ENCODE measurements at regions of chr20 and their contacts with region 1.

Region 1: GRCh38 chr20:48657475-48658470 is 170.0 kb downstream of the PREX1 start:
- H3K4me3 ChIP-seq: no peak overlapping the region
- H3K27ac ChIP-seq: no peak overlapping the region
- H3K4me1 ChIP-seq: no peaks in the 10 kb centered on the region
- CTCF ChIP-seq: peak; percentile 89

Region 2: GRCh38 chr20:48597405-48598302 is 60.1 kb before region 1 on chr20:
- CTCF ChIA-PET with region 1: no interaction called
- POLR2A ChIA-PET with region 1: no interaction called
- H3K4me3 ChIP-seq: no peak overlapping the region
- H3K27ac ChIP-seq: no peak overlapping the region
- H3K4me1 ChIP-seq: no peaks in the 10 kb centered on the region
- CTCF ChIP-seq: no peak

Region 3: GRCh38 chr20:48682529-48683251 is 24.9 kb after region 1 on chr20:
- CTCF ChIA-PET with region 1: interaction called, 21 read pairs
- POLR2A ChIA-PET with region 1: no interaction called
- H3K4me3 ChIP-seq: peak overlapping the region; percentile 1; the same call in 1 of the 2 replicates
- H3K27ac ChIP-seq: peak overlapping the region; percentile 50; the same call in 1 of the 2 replicates
- H3K4me1 ChIP-seq: peaks cover 12% of the 10 kb centered on the region
- CTCF ChIP-seq: no peak

Region 4: GRCh38 chr20:48697879-48698724 is 40.3 kb after region 1 on chr20:
- CTCF ChIA-PET with region 1: interaction called, 29 read pairs
- POLR2A ChIA-PET with region 1: interaction called, 3 read pairs
- H3K4me3 ChIP-seq: no peak overlapping the region
- H3K27ac ChIP-seq: no peak overlapping the region; the same call in 1 of the 2 replicates
- H3K4me1 ChIP-seq: peaks cover 7% of the 10 kb centered on the region
- CTCF ChIP-seq: no peak

Region 5: DNA sequence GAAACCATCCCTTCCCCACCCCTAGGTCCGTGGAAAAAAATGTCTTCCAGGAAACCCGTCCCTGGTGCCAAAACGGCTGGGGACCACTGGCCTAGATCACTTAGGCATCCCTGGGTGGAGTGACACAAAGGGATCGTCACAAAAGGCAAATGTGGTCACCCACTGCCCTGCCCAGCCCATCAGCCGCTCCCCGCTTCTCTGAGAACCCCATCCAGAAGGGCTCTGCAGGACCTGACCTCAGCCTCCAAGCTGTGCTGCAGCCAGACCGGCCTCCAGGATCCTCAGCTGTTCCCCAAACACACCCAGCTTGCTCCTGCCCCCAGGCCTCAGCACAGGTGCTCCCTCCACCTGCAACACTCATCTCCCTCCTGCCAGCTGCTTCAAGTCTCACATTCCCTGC is 108.4 kb after region 1 on chr20:
- CTCF ChIA-PET with region 1: no interaction called
- POLR2A ChIA-PET with region 1: no interaction called
- H3K4me3 ChIP-seq: no peak overlapping the region
- H3K27ac ChIP-seq: no peak overlapping the region
- H3K4me1 ChIP-seq: no peaks in the 10 kb centered on the region
- CTCF ChIP-seq: no peak

Region 6: DNA sequence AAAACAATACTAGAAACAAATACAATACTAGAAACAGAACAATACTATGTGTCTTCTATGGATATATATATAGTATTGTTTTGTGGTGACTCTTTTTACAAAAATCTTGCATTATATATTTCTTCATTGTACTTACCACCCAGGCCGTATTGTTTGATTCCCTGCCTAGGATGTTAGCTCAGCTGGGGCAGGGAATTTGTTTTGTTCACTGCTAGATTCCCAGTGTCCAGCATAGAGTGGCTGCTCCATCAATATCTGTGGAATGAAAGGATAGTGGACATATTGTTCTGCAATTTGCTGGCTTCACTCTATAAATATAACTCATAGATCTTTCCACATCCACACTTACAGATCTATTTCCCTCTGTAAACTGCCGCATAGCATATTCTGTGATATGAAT is 191.5 kb after region 1 on chr20:
- CTCF ChIA-PET with region 1: interaction called, 10 read pairs
- POLR2A ChIA-PET with region 1: no interaction called
- H3K4me3 ChIP-seq: no peak overlapping the region
- H3K27ac ChIP-seq: no peak overlapping the region
- H3K4me1 ChIP-seq: no peaks in the 10 kb centered on the region
- CTCF ChIP-seq: no peak

Region 7: GRCh38 chr20:48897246-48897994 is 239.6 kb after region 1 on chr20:
- CTCF ChIA-PET with region 1: interaction called, 16 read pairs
- POLR2A ChIA-PET with region 1: no interaction called
- H3K4me3 ChIP-seq: no peak overlapping the region
- H3K27ac ChIP-seq: no peak overlapping the region
- H3K4me1 ChIP-seq: no peaks in the 10 kb centered on the region
- CTCF ChIP-seq: no peak

Region 8: DNA sequence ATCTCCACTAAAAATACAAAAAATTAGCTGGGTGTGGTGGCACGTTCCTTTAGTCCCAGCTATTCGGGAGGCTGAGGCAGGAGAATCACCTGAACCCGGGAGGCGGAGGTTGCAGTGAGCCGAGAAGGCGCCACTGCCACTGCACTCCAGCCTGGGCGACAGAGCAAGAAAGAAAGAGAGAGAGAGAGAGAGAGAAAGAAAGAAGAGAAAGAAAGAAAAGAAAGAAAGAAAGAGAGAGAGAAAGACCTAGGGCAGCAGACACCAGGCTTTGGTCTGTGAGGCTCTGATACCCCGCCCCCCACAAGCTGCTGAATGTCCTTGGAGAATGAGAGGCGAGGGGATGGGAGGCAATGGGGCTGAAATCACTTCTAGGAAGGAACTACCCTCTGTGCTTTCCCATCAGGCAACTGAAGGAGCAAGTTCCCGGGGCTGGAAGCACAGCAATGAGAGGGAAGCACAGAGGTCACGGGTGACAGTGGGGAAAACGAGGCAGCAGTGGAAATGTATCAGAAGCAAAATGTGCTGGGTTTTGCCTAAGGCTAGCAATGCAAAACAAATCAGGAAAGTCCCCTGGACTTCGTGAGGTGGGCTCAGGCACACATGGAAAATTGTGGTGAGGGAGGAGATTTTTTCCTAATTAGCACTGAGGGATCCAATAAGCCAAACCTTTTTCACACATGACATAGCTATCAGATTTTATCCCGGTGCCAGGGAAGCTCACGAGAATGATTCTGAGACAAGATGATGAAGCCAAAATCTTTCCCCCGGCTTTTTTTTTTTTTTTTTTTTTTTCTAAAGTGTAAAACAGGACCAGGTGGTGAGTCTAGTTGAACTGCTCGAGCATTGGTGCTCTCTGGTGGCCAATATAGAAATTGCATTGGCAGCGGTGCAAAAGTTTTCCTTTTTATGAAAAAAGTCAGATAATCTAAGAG is 246.9 kb after region 1 on chr20:
- CTCF ChIA-PET with region 1: interaction called, 135 read pairs
- POLR2A ChIA-PET with region 1: interaction called, 8 read pairs
- H3K4me3 ChIP-seq: no peak overlapping the region
- H3K27ac ChIP-seq: no peak overlapping the region
- H3K4me1 ChIP-seq: no peaks in the 10 kb centered on the region
- CTCF ChIP-seq: 0 out of 2 replicates have a peak, but pooled peaks have one; percentile 33

Measured in HEK293 (cell line).